Activated CD8-positive, alpha-beta T cell treated with anti-CD3 and anti-CD28 coated beads for 36 hours (primary cell): ENCODE measurements at regions of chr7 and their contacts with region 1.

Region 1: GRCh38 chr7:35519971-35520809 is 174.7 kb downstream of the HERPUD2 start:
- DNase-seq: peak; percentile 66
- ATAC-seq: peak; percentile 92
- H3K4me3 Mint-ChIP-seq: no peak overlapping the region
- H3K27ac Mint-ChIP-seq: no peak overlapping the region
- H3K4me1 Mint-ChIP-seq: no peaks in the 10 kb centered on the region
- H3K27me3 Mint-ChIP-seq: no peaks in the 10 kb centered on the region
- CTCF ChIP-seq: peak; percentile 88

Region 2: DNA sequence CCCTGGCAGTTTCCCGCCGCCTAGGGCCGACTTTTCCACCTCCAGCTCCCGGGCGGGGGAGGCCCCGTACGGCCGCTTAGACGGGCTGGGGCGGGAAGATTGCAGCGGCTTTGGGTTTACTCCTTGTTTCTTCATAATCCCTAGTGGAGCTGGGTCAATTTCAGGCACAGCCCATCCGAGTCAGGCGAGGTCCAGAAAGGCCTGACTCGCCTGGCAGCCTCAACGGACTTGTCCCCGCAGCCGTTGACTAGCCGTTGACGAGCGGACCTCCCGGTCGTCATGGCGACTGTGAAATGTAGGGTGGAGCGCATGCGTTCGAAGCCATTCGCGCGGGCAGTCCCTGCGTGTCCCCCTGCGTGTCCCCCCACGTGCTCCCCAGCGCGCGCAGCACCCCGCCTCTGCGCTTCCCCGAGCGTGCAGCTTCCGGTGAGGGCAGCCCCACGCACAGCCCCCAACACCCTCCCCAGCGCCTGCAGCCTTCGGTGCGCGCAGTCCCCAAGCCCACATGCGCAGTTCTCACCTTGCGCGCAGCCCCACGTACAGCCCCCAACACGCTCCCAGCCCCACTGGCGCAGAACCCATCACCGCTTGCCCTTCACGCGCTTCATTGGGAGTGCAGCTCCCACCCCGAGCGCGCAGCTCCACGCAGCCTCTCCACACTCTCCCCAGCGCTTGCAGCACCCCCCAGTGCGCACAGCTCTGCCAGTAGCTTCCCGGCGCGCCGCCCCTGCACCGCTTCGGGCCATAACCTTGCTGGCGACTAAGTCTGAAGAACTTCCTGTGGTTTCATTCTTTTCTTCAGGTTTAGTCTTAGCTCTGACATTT is 334.1 kb before region 1 on chr7:
- CTCF ChIA-PET with region 1: interaction called, 5 read pairs
- POLR2A ChIA-PET with region 1: no interaction called
- intact Hi-C with region 1: loop called (anchors 10 kb)
- DNase-seq: peak; percentile 30
- ATAC-seq: peak; percentile 58
- H3K4me3 Mint-ChIP-seq: peak overlapping the region; percentile 60
- H3K27ac Mint-ChIP-seq: no peak overlapping the region
- H3K4me1 Mint-ChIP-seq: peaks cover 7% of the 10 kb centered on the region
- H3K27me3 Mint-ChIP-seq: peaks cover 29% of the 10 kb centered on the region
- CTCF ChIP-seq: no peak

Region 3: GRCh38 chr7:35508623-35509400 is 11.4 kb before region 1 on chr7:
- CTCF ChIA-PET with region 1: interaction called, 12 read pairs
- POLR2A ChIA-PET with region 1: interaction called, 3 read pairs
- intact Hi-C with region 1: no loop called
- DNase-seq: no peak
- ATAC-seq: no peak
- H3K4me3 Mint-ChIP-seq: no peak overlapping the region
- H3K27ac Mint-ChIP-seq: no peak overlapping the region
- H3K4me1 Mint-ChIP-seq: no peaks in the 10 kb centered on the region
- H3K27me3 Mint-ChIP-seq: no peaks in the 10 kb centered on the region
- CTCF ChIP-seq: no peak

Region 4: DNA sequence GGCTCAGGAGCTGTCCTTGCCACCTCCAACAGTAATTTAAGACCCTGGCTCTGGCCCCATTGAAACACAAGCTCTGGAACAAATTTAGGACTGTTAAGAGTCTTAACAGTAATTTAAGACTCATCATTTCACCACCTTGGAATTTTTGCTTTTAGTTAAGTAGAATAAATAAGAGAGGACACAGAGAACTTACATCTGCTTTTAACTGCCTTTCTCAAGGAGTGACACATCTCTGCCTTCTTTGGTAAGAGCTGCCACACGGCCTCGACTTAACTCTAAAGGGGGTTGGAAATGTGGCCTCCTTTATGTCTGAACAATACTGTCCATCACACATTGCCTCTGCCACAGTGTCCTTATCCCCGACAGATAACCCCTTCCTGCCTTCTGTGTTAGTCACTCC is 96.9 kb after region 1 on chr7:
- CTCF ChIA-PET with region 1: no interaction called
- POLR2A ChIA-PET with region 1: no interaction called
- intact Hi-C with region 1: no loop called
- DNase-seq: no peak
- ATAC-seq: no peak
- H3K4me3 Mint-ChIP-seq: no peak overlapping the region
- H3K27ac Mint-ChIP-seq: no peak overlapping the region
- H3K4me1 Mint-ChIP-seq: no peaks in the 10 kb centered on the region
- H3K27me3 Mint-ChIP-seq: no peaks in the 10 kb centered on the region
- CTCF ChIP-seq: no peak

Region 5: DNA sequence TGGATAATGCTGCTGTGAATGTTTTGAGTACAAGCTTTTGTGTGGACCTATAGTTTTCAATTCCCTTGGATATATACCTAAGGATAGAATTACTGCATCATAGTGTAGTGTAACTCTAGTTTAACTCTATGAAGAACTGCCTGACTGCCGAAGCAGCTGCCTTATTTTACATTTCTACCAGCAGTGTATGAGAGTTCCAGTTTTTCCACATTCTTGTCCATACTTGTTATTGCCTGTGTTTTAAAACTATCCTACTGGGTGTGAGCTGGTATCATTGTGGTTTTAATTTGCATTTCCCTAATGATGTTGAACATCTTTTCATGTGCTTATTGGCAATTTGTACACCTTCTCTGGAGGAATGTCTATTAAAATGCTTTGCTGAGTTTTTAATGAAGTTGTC is 296.3 kb after region 1 on chr7:
- CTCF ChIA-PET with region 1: no interaction called
- POLR2A ChIA-PET with region 1: no interaction called
- intact Hi-C with region 1: no loop called
- DNase-seq: no peak
- ATAC-seq: no peak
- H3K4me3 Mint-ChIP-seq: no peak overlapping the region
- H3K27ac Mint-ChIP-seq: peak overlapping the region; percentile 47
- H3K4me1 Mint-ChIP-seq: peaks cover 78% of the 10 kb centered on the region
- H3K27me3 Mint-ChIP-seq: no peaks in the 10 kb centered on the region
- CTCF ChIP-seq: no peak

Region 6: DNA sequence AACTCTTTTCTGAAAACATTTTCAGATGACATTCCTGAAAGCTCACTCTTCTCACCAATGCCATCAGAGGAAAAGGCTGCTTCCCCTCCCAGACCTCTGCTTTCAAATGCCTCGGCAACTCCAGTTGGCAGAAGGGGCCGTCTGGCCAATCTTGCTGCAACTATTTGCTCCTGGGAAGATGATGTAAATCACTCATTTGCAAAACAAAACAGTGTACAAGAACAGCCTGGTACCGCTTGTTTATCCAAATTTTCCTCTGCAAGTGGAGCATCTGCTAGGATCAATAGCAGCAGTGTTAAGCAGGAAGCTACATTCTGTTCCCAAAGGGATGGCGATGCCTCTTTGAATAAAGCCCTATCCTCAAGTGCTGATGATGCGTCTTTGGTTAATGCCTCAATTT is 886.0 kb after region 1 on chr7:
- CTCF ChIA-PET with region 1: no interaction called
- POLR2A ChIA-PET with region 1: no interaction called
- intact Hi-C with region 1: no loop called
- DNase-seq: no peak
- ATAC-seq: no peak
- H3K4me3 Mint-ChIP-seq: no peak overlapping the region
- H3K27ac Mint-ChIP-seq: no peak overlapping the region
- H3K4me1 Mint-ChIP-seq: no peaks in the 10 kb centered on the region
- H3K27me3 Mint-ChIP-seq: no peaks in the 10 kb centered on the region
- CTCF ChIP-seq: no peak